Posterior vena cava (tissue), 2 donors: ENCODE measurements at regions of chr11 and their contacts with region 1.

Region 1: DNA sequence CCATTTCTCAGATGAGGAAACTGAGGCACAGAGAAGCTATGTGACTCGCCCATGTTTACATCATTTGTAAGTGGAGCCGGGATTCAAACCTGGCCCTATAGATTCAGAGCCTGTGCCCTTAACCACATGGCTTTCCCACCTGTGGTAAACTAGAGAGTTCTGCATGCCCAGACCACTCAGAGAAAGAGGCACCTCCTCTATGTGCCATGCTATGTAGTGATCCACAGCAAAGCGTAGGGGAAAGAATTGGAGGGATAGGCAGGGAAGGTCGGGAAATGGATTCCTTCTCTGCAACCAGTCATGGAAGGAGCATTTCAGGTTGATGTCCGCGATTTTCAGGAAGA is 15.4 kb upstream of the POU2AF2 start:
- DNase-seq: no peak

Region 2: GRCh38 chr11:110463153-110463552 is 766.9 kb before region 1 on chr11:
- intact Hi-C with region 1: loop called in 1 of 2 experiments (anchors 5 kb)
- DNase-seq: peak; percentile 86

Region 3: GRCh38 chr11:110711776-110712658 is 518.1 kb before region 1 on chr11 and contains the start of gene ARHGAP20:
- intact Hi-C with region 1: loop called (anchors 5 kb)
- DNase-seq: peak; percentile 92
- total RNA-seq, gene ARHGAP20: 8.6 TPM